ENCODE measurements at regions of chrX and their contacts with region 1.

Region 1: GRCh38 chrX:132615391-132616131 is 126.7 kb upstream of the MBNL3 start:
- DNase-seq: peak; percentile 69 to 76
- H3K4me3 ChIP-seq: no peak overlapping the region
- H3K4me3 Mint-ChIP-seq: no peak overlapping the region
- H3K27ac Mint-ChIP-seq: no peak overlapping the region
- H3K4me1 ChIP-seq: peaks cover 22% of the 10 kb centered on the region
- H3K4me1 Mint-ChIP-seq: peaks cover 5% of the 10 kb centered on the region
- H3K27me3 ChIP-seq: no peaks in the 10 kb centered on the region
- H3K27me3 Mint-ChIP-seq: no peaks in the 10 kb centered on the region
- CTCF ChIP-seq: peak; percentile 33 to 43

Region 2: GRCh38 chrX:131609480-131609879 is 1006.1 kb before region 1 on chrX:
- CTCF ChIA-PET with region 1: no interaction called
- POLR2A ChIA-PET with region 1: no interaction called
- intact Hi-C with region 1: no loop called
- DNase-seq: no peak
- H3K4me3 ChIP-seq: no peak overlapping the region
- H3K4me3 Mint-ChIP-seq: no peak overlapping the region
- H3K27ac Mint-ChIP-seq: no peak overlapping the region
- H3K4me1 ChIP-seq: no peaks in the 10 kb centered on the region
- H3K4me1 Mint-ChIP-seq: no peaks in the 10 kb centered on the region
- H3K27me3 ChIP-seq: no peaks in the 10 kb centered on the region
- H3K27me3 Mint-ChIP-seq: peaks cover 7% of the 10 kb centered on the region
- CTCF ChIP-seq: no peak

Region 3: GRCh38 chrX:131830400-131831184 is 785.0 kb before region 1 on chrX:
- CTCF ChIA-PET with region 1: no interaction called
- POLR2A ChIA-PET with region 1: no interaction called
- intact Hi-C with region 1: loop called (anchors 2 kb)
- DNase-seq: peak; percentile 87 to 93
- H3K4me3 ChIP-seq: peak overlapping the region; percentile 42
- H3K4me3 Mint-ChIP-seq: peak overlapping the region; percentile 90
- H3K27ac Mint-ChIP-seq: peak overlapping the region; percentile 87
- H3K4me1 ChIP-seq: peaks cover 16% of the 10 kb centered on the region
- H3K4me1 Mint-ChIP-seq: peaks cover 9% of the 10 kb centered on the region
- H3K27me3 ChIP-seq: no peaks in the 10 kb centered on the region
- H3K27me3 Mint-ChIP-seq: no peaks in the 10 kb centered on the region
- CTCF ChIP-seq: peak; percentile 52 to 57

Region 4: GRCh38 chrX:132226169-132226568 is 389.4 kb before region 1 on chrX:
- CTCF ChIA-PET with region 1: interaction called, 17 read pairs
- POLR2A ChIA-PET with region 1: no interaction called
- intact Hi-C with region 1: loop called (anchors 1 kb)
- DNase-seq: no peak
- H3K4me3 ChIP-seq: no peak overlapping the region
- H3K4me3 Mint-ChIP-seq: no peak overlapping the region
- H3K27ac Mint-ChIP-seq: no peak overlapping the region
- H3K4me1 ChIP-seq: no peaks in the 10 kb centered on the region
- H3K4me1 Mint-ChIP-seq: peaks cover 10% of the 10 kb centered on the region
- H3K27me3 ChIP-seq: no peaks in the 10 kb centered on the region
- H3K27me3 Mint-ChIP-seq: no peaks in the 10 kb centered on the region
- CTCF ChIP-seq: peak; percentile 32 to 34

Region 5: DNA sequence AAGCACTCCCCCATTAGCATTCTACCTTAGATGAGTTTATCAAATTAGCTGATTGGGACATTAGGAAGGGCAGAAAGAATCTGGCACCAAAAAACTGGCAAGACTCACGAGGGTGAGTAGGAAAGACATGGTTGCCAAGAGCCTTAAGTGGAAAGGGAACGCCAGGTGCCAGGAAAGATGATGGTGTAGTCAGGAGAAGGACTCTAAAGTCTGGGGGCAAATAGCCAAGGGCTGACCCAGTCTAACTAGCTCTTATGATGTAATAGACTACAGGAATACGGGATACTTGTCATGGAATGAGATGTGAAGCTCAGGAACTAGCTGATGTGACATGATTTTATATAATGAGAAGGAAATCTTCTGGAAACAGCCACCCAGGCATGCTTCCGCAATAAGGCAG is 221.6 kb before region 1 on chrX:
- CTCF ChIA-PET with region 1: interaction called, 6 read pairs
- POLR2A ChIA-PET with region 1: no interaction called
- intact Hi-C with region 1: loop called (anchors 5 kb)
- DNase-seq: no peak
- H3K4me3 ChIP-seq: no peak overlapping the region
- H3K4me3 Mint-ChIP-seq: no peak overlapping the region
- H3K27ac Mint-ChIP-seq: peak overlapping the region; percentile 53
- H3K4me1 ChIP-seq: peaks cover 34% of the 10 kb centered on the region
- H3K4me1 Mint-ChIP-seq: peaks cover 23% of the 10 kb centered on the region
- H3K27me3 ChIP-seq: no peaks in the 10 kb centered on the region
- H3K27me3 Mint-ChIP-seq: no peaks in the 10 kb centered on the region
- CTCF ChIP-seq: no peak

Region 6: GRCh38 chrX:132488819-132489577 is 126.6 kb before region 1 on chrX and contains the start of gene MBNL3:
- CTCF ChIA-PET with region 1: no interaction called
- POLR2A ChIA-PET with region 1: no interaction called
- intact Hi-C with region 1: loop called (anchors 2 kb)
- DNase-seq: peak; percentile 71
- H3K4me3 ChIP-seq: peak within 1 kb of the TSS; percentile 74
- H3K4me3 Mint-ChIP-seq: peak within 1 kb of the TSS; percentile 88
- H3K27ac Mint-ChIP-seq: peak within 1 kb of the TSS; percentile 63
- H3K4me1 ChIP-seq: peaks cover 18% of the 10 kb centered on the region; the same call in 1 of the 2 replicates
- H3K4me1 Mint-ChIP-seq: no peaks in the 10 kb centered on the region
- H3K27me3 ChIP-seq: no peaks in the 10 kb centered on the region
- H3K27me3 Mint-ChIP-seq: no peaks in the 10 kb centered on the region
- CTCF ChIP-seq: no peak
- total RNA-seq, gene MBNL3: 174 and 195 TPM in 2 replicates

Measured in Caco-2 (cell line).